ENCODE measurements at regions of chr9 and their contacts with region 1.

Region 1: GRCh38 chr9:19720377-19720776 is 68.5 kb downstream of the SLC24A2 start:
- DNase-seq: no peak
- H3K4me3 ChIP-seq: no peak overlapping the region
- H3K27ac ChIP-seq: no peak overlapping the region
- H3K4me1 ChIP-seq: no peaks in the 10 kb centered on the region
- H3K27me3 ChIP-seq: no peaks in the 10 kb centered on the region
- CTCF ChIP-seq: no peak

Region 2: GRCh38 chr9:19631181-19631580 is 89.2 kb before region 1 on chr9:
- intact Hi-C with region 1: no loop called
- DNase-seq: no peak
- H3K4me3 ChIP-seq: no peak overlapping the region
- H3K27ac ChIP-seq: no peak overlapping the region
- H3K4me1 ChIP-seq: no peaks in the 10 kb centered on the region
- H3K27me3 ChIP-seq: no peaks in the 10 kb centered on the region
- CTCF ChIP-seq: no peak

Region 3: DNA sequence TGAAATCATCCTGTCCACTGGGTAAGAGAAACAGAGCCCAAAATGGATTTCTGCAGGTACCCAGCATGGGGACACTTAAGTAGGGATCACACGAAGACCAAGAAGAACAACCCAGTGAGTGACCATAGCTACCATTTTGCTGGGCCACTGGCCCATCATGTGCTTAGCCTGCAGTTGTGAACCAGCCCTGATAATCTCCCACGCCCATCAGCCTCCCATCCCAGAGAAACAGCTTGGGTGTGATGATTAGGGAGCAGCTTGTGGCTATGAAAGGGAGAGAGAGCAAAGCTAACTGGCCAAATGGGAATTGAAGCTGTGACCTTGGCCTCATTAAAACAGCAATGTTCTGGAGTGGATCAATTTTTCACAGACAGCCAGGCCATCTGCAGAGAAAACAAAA is 70.1 kb before region 1 on chr9:
- intact Hi-C with region 1: loop called (anchors 10 kb)
- DNase-seq: no peak
- H3K4me3 ChIP-seq: no peak overlapping the region
- H3K27ac ChIP-seq: no peak overlapping the region
- H3K4me1 ChIP-seq: no peaks in the 10 kb centered on the region
- H3K27me3 ChIP-seq: no peaks in the 10 kb centered on the region
- CTCF ChIP-seq: no peak